Endothelial cell of umbilical vein (primary cell): ENCODE measurements at regions of chr3 and their contacts with region 1.

Region 1: DNA sequence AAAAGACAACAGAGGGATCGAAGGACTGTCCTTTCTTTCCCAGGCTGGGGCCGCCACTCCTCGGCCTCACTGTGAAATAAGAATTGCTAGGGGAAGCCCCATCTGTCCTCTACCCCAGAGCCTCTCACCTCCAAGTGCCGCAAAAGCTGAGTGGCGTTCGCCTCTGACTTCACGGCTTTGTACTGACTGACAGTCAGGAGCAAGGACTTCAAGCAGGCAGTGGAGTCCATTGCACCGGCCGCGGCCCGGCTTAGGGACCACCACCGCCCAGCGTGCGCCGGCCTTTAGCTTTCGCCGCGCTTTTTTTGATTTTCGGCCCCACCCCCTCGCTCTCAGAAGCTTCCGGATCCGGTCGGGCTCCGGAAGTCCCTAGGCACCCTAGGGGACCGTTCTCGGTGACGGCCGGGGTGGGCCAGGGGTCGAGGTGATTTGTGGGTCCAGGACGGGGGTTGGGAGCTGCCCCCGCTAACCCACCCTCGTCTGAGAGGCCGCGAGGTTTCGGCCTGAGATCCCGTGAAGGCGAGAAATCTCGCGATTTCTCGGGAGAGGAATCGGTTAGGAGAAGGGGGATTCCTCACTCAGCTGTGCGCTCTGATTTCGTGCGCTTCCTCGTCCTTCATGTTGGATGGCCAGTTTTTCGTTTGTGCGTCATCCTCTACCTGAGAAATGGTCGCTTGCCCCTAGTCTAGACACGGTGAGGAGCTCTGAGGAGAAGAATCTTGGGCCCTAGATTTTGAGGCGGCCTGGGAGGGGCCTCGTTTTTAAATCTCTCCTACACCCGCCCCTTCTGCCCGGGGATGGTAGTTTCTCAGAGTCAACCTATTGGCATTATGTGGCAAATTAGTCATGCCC is at the starts of genes CIP2A and DZIP3:
- DNase-seq: peak; percentile 93
- H3K4me3 ChIP-seq: peak within 1 kb of the TSS; percentile 72 to 86 (median 75)
- H3K27ac ChIP-seq: peak within 1 kb of the TSS; percentile 87
- H3K4me1 ChIP-seq: peaks cover 18% of the 10 kb centered on the region
- H3K27me3 ChIP-seq: no peaks in the 10 kb centered on the region
- CTCF ChIP-seq: no peak
- POLR2A ChIP-seq: peak; percentile 76
- total RNA-seq, gene CIP2A: 28.7 and 33.7 TPM in 2 replicates
- total RNA-seq, gene DZIP3: 6.5 and 7.1 TPM in 2 replicates

Region 2: DNA sequence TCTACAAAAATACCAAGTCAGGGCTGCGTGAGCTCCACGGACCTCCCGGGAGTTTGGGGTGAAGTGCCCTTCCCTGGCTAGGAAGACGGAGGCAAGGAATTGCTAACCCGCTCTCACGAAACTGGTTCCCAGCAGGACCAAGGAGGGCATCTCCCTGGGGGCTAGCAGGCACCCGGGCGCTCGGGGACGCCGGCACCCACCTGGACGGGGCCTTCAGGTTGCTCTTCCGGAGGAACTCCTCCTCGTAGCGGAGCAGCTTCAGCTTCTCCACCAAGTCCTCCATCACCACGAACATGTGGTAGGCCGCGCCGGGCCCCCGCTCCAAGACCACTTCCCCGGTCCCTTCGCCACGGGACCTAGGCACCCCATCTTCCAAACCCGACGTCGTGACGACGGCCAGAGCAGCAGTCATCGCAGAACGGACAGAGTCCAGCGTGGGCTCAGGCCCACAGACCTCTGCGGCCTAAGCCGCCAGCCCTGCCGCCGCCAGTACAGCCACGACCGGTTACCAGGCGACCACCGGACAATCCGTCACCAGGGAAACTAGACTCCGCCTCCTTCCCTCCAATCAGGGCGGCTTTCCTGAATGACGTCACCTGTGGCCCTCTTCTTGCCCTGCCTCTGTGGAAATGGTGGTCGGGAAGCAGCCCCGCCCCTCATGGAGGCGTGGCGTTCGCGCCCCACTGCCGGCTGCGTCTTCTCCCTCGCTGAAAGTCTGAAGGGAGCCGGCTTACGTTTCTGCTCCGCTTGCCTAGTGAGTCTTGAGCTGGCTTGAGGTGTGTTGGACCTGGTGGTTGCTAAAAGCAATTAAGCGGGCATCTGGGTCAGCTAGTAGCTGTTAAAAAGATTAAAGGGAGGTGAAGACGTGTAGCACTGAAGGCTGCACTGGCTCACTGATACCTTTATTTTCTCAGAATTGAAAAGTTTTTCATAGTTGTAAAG is 367.2 kb before region 1 on chr3 and contains the start of gene IFT57:
- CTCF ChIA-PET with region 1: no interaction called
- POLR2A ChIA-PET with region 1: no interaction called
- dilution Hi-C with region 1: no loop called
- intact Hi-C with region 1: loop called (anchors 1 kb)
- DNase-seq: peak; percentile 99
- H3K4me3 ChIP-seq: peak within 1 kb of the TSS; percentile 66 to 87 (median 82)
- H3K27ac ChIP-seq: peak within 1 kb of the TSS; percentile 68
- H3K4me1 ChIP-seq: peaks cover 21% of the 10 kb centered on the region
- H3K27me3 ChIP-seq: no peaks in the 10 kb centered on the region
- CTCF ChIP-seq: no peak
- POLR2A ChIP-seq: peak; percentile 36
- total RNA-seq, gene IFT57: 23.4 and 25.1 TPM in 2 replicates

Region 3: DNA sequence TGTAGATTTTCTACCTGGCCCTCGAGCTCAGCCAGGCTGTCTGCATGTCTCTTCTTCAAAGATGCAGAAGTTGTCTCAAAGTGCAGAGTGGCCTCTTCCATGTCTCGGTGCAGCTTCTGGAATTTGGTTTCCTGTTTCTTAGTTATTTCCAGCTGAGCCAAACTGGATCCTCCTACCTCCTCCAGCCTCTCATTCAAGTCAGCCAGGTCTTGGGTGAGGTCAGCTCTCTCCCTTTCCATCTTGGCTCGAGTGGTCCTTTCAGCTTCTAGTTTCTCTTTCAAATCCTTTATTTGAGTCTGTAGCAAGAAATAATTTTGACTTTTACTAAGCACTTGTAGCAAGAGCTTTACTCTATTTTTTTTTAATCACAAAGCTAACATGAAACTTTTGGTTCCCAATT is 160.8 kb before region 1 on chr3:
- CTCF ChIA-PET with region 1: no interaction called
- POLR2A ChIA-PET with region 1: no interaction called
- dilution Hi-C with region 1: no loop called
- intact Hi-C with region 1: no loop called
- DNase-seq: no peak
- H3K4me3 ChIP-seq: no peak overlapping the region
- H3K27ac ChIP-seq: no peak overlapping the region
- H3K4me1 ChIP-seq: no peaks in the 10 kb centered on the region
- H3K27me3 ChIP-seq: no peaks in the 10 kb centered on the region
- CTCF ChIP-seq: no peak
- POLR2A ChIP-seq: no peak

Region 4: GRCh38 chr3:108489771-108490170 is 99.6 kb before region 1 on chr3:
- CTCF ChIA-PET with region 1: no interaction called
- POLR2A ChIA-PET with region 1: no interaction called
- dilution Hi-C with region 1: no loop called
- intact Hi-C with region 1: loop called (anchors 1 kb)
- DNase-seq: peak; percentile 75
- H3K4me3 ChIP-seq: no peak overlapping the region
- H3K27ac ChIP-seq: no peak overlapping the region
- H3K4me1 ChIP-seq: peaks cover 12% of the 10 kb centered on the region
- H3K27me3 ChIP-seq: no peaks in the 10 kb centered on the region
- CTCF ChIP-seq: peak; percentile 51 to 57
- POLR2A ChIP-seq: no peak

Region 5: DNA sequence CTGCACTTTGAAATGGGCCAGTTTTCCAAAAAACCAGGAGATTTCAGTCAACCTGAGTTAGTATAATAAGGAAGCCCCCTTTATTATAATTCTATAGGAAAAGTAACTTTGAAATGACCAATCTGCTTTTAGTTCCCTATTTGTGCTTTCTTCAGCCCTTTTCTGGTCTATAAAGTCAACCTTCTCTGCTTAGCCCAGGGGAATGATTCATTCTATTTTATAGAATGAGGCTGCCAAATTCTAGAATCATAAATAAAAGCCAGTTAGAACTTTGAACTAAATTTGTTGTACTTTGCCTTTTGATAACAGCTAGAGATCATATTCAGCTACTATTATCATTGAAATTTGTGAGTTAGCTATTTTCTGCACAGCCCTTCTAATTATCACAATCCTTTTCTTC is 24.8 kb before region 1 on chr3:
- CTCF ChIA-PET with region 1: interaction called, 3 read pairs
- POLR2A ChIA-PET with region 1: no interaction called
- dilution Hi-C with region 1: no loop called
- intact Hi-C with region 1: loop called (anchors 2 kb)
- DNase-seq: peak; percentile 33
- H3K4me3 ChIP-seq: no peak overlapping the region
- H3K27ac ChIP-seq: no peak overlapping the region
- H3K4me1 ChIP-seq: peaks cover 13% of the 10 kb centered on the region
- H3K27me3 ChIP-seq: no peaks in the 10 kb centered on the region
- CTCF ChIP-seq: no peak
- POLR2A ChIP-seq: no peak